ENCODE measurements at regions of chr7 and their contacts with region 1.

Region 1: GRCh38 chr7:45111298-45112223 is at the start of gene TBRG4:
- DNase-seq: peak; percentile 94

Region 2: DNA sequence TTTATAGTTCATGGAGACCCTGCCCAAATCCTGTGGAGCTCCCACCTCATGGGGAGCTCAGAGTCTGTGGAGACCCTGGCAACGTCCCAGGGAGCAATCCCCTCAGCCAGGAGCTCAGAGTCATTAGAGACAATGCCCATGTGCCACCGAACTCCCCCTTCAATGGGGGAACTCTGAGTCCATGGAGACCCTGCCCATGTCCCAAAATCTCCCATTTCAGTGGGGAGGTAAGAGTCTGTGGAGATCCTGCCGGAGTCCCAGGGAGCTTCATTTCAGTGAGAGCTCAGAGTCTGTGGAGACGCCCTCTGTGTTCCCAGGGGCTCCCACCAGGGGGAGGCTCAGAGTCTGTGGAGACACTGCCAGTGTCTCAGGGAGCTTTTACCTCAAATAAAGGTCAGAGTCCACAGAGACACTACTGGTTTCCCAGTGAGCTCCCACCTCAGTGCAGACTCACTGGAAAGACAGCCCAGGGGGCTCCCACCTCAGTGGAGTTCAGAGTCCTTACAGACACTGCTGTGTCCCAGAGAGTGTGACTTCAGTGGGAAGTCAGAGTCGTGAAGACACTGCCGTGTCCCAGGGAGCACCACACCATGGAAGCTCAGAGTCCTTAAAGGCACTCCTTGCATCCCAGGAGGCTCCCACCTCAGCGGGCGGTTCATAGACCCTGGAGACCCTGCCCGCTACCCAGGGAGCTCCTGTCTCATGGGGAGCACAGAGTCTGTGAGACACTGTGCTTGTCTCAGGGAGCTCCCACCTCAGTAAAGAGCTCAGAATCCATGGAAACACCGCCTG is 137.8 kb before region 1 on chr7:
- CTCF ChIA-PET with region 1: interaction called, 6 read pairs
- POLR2A ChIA-PET with region 1: interaction called, 25 read pairs
- DNase-seq: peak; percentile 61

Region 3: DNA sequence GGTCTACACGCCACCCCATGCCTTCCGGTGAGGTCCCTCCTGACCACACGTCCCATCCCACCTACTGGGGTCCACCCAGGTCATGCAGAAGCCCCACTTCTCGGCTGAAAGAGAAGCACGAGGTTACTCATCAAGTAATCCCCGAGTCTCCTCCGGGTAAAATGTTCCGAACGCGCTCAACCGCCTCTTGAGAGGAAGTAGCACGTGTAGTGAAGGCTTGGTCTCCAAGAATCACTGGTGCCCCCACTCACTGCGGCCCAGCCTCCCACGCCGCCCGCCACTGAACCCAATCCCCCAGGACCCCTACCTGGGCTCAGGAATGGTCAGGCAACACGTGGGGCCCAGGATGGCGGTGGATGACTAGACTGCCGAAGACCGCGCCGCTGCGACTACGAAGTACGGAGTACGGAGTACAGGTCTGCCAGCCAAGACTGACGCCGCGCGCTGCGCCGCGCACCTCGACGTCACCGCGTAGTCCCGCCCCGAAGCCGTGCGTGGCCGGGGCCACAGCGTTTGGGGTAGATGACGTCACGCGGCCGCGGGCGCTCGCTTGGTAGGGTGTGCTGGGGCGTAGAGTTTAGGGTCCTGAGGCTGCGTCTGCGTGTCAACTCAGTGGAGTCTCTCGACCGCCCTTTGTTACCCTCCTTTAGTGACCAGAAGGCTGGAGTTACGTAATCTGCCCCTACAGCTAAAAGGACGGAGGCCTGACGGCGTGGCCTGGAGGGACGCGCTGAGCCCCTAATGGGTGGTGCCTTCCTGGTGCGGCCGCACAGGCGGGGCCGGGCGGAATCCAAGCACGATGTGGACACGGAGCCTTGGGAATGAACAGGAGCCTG is 125.1 kb before region 1 on chr7:
- CTCF ChIA-PET with region 1: no interaction called
- POLR2A ChIA-PET with region 1: interaction called, 15 read pairs
- DNase-seq: peak; percentile 93

Region 4: DNA sequence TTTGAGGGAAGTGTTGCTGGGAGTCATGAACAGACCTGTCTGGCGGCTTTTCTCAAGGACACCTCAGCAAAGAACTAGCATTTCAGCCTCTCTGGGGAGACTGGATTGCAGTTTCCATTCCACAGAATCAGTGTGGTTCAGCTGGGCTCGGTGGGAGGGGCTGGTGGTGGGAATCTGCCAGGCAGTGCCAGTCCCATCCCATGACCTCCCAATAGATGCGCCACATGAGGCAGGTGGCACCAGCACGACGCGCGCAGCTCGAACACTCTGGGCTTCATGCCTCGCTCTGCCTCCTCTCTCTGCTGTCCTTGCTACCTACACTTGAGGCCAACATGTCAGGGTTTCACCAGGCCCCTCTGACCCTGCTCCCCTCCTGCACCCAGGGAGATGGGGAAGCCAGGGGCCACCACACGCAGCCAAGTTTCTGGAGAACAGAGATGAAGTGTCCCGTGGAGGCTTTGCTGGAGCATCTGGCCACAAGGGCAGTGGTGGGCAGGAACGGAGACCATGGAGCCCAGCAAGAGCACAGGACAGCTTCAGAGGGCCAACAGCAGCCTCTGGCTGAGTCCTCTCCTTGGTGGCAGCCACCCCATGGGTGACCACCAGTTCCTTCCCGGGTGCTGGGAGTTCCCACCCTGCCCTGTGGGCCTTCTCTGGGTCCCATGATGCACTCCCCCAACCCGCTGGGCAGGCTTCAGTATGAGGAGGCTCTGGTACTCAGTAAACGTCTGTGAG is 25.1 kb before region 1 on chr7:
- CTCF ChIA-PET with region 1: no interaction called
- POLR2A ChIA-PET with region 1: interaction called, 10 read pairs
- DNase-seq: no peak

Region 5: DNA sequence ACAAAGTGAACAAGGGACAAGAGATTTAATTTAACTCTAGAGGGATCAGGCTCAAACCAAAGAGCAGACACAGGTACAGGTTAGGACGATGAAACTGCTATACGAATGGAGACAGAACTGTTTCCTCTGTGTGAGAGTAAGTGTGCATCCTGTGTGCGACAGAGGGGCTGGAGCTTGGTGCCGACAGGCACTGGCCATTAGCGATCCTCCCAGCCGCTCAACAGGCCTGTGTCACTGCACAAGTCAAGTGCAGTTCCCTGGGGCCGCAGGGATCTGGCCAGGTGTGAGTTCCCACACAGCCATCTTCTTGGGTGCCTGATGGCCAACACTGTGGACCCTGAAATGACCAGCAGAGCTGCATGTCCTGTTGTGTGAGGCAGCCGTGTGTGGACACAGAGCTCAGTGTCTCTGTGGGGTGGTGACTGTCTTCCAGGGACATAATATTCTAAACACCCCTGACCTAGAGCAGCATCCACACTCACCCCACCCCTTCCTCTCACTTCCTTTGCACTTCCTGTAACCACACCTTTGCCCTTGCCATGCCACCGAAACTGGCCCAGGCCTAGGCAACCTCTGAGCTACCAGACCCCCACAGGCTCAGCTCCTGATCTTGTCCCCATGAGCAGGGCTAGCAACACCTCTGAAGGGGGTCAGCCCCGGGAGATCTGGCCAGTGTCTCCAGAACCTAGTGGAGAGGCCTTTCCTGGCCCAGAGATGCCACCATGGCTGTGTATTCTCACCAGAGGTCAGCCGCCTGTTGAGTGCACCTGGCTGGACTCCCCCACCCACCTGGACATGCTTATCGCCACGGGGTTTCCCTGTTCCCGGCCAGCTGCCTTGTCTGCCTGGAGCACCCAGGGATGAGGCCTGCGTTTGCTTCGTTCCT is 11.7 kb after region 1 on chr7:
- CTCF ChIA-PET with region 1: no interaction called
- POLR2A ChIA-PET with region 1: interaction called, 30 read pairs
- DNase-seq: no peak

Region 6: DNA sequence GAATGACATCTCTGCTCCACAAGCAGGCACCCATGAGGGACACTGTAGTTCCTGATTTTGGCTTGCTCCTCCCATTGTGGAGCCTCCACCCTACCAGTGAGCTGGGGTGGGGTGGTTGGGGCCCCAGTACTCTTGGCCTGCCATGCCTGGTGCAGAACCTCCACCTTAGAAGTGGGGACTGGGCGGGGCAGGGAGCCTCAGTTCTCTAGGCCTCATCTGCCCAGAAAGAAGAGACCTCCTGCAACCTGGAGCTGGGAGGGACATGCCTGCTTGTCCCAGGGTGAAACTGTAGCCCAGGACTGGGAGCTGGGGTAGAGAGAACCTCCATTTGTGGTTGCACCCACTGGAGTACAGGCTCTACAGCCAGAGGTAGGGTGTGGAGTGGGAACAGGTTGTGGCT is 60.4 kb after region 1 on chr7:
- CTCF ChIA-PET with region 1: no interaction called
- POLR2A ChIA-PET with region 1: no interaction called
- DNase-seq: no peak